ENCODE measurements at regions of chr16 and their contacts with region 1.

Region 1: GRCh38 chr16:85027349-85027957 is at the start of gene KIAA0513:
- DNase-seq: peak; percentile 91 to 98 (median 96)
- H3K4me3 ChIP-seq: peak within 1 kb of the TSS; percentile 58 to 82
- H3K4me3 Mint-ChIP-seq: peak within 1 kb of the TSS; percentile 88 to 98 (median 94)
- H3K27ac ChIP-seq: peak within 1 kb of the TSS; percentile 78
- H3K27ac Mint-ChIP-seq: peak within 1 kb of the TSS; percentile 92 to 98 (median 95)
- H3K4me1 ChIP-seq: peaks cover 28% of the 10 kb centered on the region
- H3K4me1 Mint-ChIP-seq: peaks cover 19 to 44% (median 26%) of the 10 kb centered on the region in 4 donors
- H3K27me3 ChIP-seq: no peaks in the 10 kb centered on the region
- H3K27me3 Mint-ChIP-seq: no peaks in the 10 kb centered on the region
- total RNA-seq, gene KIAA0513: 17.7 to 19.0 TPM

Region 2: DNA sequence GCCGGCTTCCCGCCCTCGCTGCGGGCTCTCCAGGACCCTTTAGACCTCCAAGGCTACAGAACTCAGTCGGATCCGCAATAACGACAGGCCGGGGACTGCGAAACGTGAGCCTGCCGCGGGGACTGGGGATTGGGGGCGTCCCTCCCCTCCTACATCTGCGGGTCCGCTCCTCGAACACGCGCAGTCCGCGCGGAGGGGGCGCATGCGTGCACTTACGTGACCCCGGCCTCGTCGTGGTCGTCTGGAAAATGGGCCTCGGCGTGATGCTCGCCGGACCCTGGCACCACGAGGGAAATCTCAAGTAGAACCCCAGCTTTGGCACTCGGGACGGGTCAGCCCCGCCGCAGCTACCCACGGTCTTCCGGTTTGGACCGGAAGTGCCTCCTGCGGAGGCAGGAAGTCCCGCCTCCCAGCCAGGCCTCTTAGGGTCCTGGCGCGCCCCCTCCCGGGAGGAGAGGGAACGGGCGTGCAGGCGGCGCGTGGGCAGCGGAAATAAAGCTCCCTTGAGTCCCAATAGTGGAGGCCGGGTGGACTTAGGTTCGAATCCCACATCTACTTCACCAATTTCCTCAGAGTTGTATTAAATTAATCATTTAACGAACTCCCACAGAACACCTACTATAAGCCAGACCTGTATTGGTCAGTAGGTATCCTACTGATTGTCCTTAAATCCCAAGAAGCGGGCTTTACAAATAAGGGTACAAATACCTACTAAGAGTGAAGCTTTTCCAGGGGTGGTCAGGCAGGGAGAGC is 840.6 kb before region 1 on chr16 and contains the start of gene TAF1C:
- CTCF ChIA-PET with region 1: no interaction called
- POLR2A ChIA-PET with region 1: no interaction called
- intact Hi-C with region 1: loop called (anchors 5 kb)
- DNase-seq: peak; percentile 83 to 88 (median 86)
- H3K4me3 ChIP-seq: peak within 1 kb of the TSS; percentile 90 to 98
- H3K4me3 Mint-ChIP-seq: peak within 1 kb of the TSS; percentile 91 to 95 (median 93)
- H3K27ac ChIP-seq: peak within 1 kb of the TSS; percentile 71
- H3K27ac Mint-ChIP-seq: peak within 1 kb of the TSS; percentile 77 to 97 (median 94)
- H3K4me1 ChIP-seq: peaks cover 19% of the 10 kb centered on the region
- H3K4me1 Mint-ChIP-seq: peaks cover 10 to 32% (median 21%) of the 10 kb centered on the region in 4 donors
- H3K27me3 ChIP-seq: no peaks in the 10 kb centered on the region
- H3K27me3 Mint-ChIP-seq: no peaks in the 10 kb centered on the region
- total RNA-seq, gene TAF1C: 91.5 to 102 TPM

Region 3: GRCh38 chr16:84970447-84971127 is 56.9 kb before region 1 on chr16:
- CTCF ChIA-PET with region 1: interaction called, 3 read pairs
- POLR2A ChIA-PET with region 1: no interaction called
- intact Hi-C with region 1: loop called (anchors 2 kb)
- DNase-seq: peak; percentile 72 to 81 (median 75)
- H3K4me3 ChIP-seq: no peak overlapping the region
- H3K4me3 Mint-ChIP-seq: peak overlapping the region in 3 of 8 donors; percentile 1 to 41 (median 15)
- H3K27ac ChIP-seq: no peak overlapping the region
- H3K27ac Mint-ChIP-seq: peak overlapping the region in 6 of 7 donors; percentile 22 to 74 (median 64)
- H3K4me1 ChIP-seq: peaks cover 7% of the 10 kb centered on the region
- H3K4me1 Mint-ChIP-seq: peaks cover 4 to 6% (median 5%) of the 10 kb centered on the region in 4 donors
- H3K27me3 ChIP-seq: no peaks in the 10 kb centered on the region
- H3K27me3 Mint-ChIP-seq: no peaks in the 10 kb centered on the region

Region 4: GRCh38 chr16:84985079-84986065 is 42.1 kb before region 1 on chr16:
- CTCF ChIA-PET with region 1: no interaction called
- POLR2A ChIA-PET with region 1: no interaction called
- intact Hi-C with region 1: no loop called
- DNase-seq: no peak
- H3K4me3 ChIP-seq: no peak overlapping the region
- H3K4me3 Mint-ChIP-seq: peak overlapping the region in 1 of 8 donors; percentile 5
- H3K27ac ChIP-seq: no peak overlapping the region
- H3K27ac Mint-ChIP-seq: peak overlapping the region in 6 of 7 donors; percentile 43 to 90 (median 84)
- H3K4me1 ChIP-seq: peaks cover 11% of the 10 kb centered on the region
- H3K4me1 Mint-ChIP-seq: peaks cover 15 to 18% (median 16%) of the 10 kb centered on the region in 4 donors
- H3K27me3 ChIP-seq: no peaks in the 10 kb centered on the region
- H3K27me3 Mint-ChIP-seq: no peaks in the 10 kb centered on the region

Region 5: DNA sequence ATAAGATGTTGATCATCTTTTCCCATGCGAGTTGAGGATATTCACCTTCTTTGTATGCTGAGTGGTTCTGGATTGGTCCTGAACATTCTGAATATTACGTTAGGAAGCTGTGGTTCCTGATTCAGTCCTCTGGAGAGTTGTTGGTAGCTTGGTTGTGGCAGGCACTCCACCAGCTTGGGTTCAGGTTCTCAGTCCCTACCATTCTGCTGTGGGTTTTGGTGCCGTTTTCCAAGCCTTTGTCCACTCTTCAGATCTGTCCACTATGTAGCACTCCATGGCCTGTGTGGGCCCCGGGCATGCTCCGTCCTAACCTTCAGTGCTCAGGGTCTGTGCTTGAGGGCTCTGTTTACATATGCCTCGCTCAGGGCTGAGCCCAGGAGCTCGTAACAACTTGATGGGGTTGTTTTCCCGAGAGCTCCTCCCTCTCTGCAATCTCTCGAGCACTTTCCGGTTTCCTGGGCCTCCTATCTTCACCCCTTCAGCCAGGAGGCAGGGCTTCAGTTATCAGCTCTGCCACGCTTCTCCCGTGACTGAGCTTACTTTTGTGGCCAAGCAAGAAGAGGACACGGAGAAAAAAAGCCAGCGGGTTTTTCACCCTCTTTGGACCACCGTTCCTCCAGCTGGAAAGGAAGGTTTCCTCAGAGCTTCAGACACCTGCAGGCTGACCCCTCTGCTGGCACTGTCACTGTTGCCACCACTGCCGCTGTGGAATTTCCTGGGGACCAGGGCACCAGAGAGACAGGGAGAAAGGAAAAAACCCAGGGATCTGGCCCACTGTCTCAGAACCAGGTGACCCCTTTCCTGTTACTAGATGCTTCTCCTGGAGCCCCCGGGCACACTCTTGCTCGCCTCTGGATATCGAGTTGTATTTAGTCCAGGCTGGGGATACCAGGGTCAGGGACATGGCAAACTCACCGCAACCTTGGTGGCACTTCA is 19.7 kb after region 1 on chr16:
- CTCF ChIA-PET with region 1: interaction called, 4 read pairs
- POLR2A ChIA-PET with region 1: interaction called, 64 read pairs
- intact Hi-C with region 1: no loop called
- DNase-seq: no peak
- H3K4me3 ChIP-seq: no peak overlapping the region
- H3K4me3 Mint-ChIP-seq: peak overlapping the region in 4 of 8 donors; percentile 8 to 30 (median 10)
- H3K27ac ChIP-seq: no peak overlapping the region
- H3K27ac Mint-ChIP-seq: peak overlapping the region in 5 of 7 donors; percentile 4 to 79 (median 46)
- H3K4me1 ChIP-seq: peaks cover 5% of the 10 kb centered on the region
- H3K4me1 Mint-ChIP-seq: peaks cover 3 to 25% (median 6%) of the 10 kb centered on the region in 4 donors
- H3K27me3 ChIP-seq: no peaks in the 10 kb centered on the region
- H3K27me3 Mint-ChIP-seq: no peaks in the 10 kb centered on the region

Region 6: GRCh38 chr16:85086347-85087291 is 59.2 kb after region 1 on chr16:
- CTCF ChIA-PET with region 1: interaction called, 47 read pairs
- POLR2A ChIA-PET with region 1: interaction called, 30 read pairs
- intact Hi-C with region 1: loop called (anchors 1 kb)
- DNase-seq: peak; percentile 70 to 80 (median 75)
- H3K4me3 ChIP-seq: no peak overlapping the region
- H3K4me3 Mint-ChIP-seq: no peak overlapping the region
- H3K27ac ChIP-seq: no peak overlapping the region
- H3K27ac Mint-ChIP-seq: peak overlapping the region in 5 of 7 donors; percentile 24 to 62 (median 41)
- H3K4me1 ChIP-seq: no peaks in the 10 kb centered on the region
- H3K4me1 Mint-ChIP-seq: peaks cover 2 to 11% (median 8%) of the 10 kb centered on the region in 4 donors
- H3K27me3 ChIP-seq: no peaks in the 10 kb centered on the region
- H3K27me3 Mint-ChIP-seq: no peaks in the 10 kb centered on the region

Region 7: GRCh38 chr16:85137323-85138072 is 110.0 kb after region 1 on chr16:
- CTCF ChIA-PET with region 1: no interaction called
- POLR2A ChIA-PET with region 1: no interaction called
- intact Hi-C with region 1: no loop called
- DNase-seq: no peak
- H3K4me3 ChIP-seq: no peak overlapping the region
- H3K4me3 Mint-ChIP-seq: peak overlapping the region in 1 of 8 donors; percentile 45
- H3K27ac ChIP-seq: no peak overlapping the region
- H3K27ac Mint-ChIP-seq: no peak overlapping the region
- H3K4me1 ChIP-seq: no peaks in the 10 kb centered on the region
- H3K4me1 Mint-ChIP-seq: peaks cover 0 to 8% (median 5%) of the 10 kb centered on the region in 4 donors
- H3K27me3 ChIP-seq: no peaks in the 10 kb centered on the region
- H3K27me3 Mint-ChIP-seq: peaks cover 24 to 26% of the 10 kb centered on the region in 2 donors

Measured in CD4-positive, alpha-beta memory T cell (primary cell).